Mammary epithelial cell (primary cell): ENCODE measurements at regions of chr4 and their contacts with region 1.

Region 1: DNA sequence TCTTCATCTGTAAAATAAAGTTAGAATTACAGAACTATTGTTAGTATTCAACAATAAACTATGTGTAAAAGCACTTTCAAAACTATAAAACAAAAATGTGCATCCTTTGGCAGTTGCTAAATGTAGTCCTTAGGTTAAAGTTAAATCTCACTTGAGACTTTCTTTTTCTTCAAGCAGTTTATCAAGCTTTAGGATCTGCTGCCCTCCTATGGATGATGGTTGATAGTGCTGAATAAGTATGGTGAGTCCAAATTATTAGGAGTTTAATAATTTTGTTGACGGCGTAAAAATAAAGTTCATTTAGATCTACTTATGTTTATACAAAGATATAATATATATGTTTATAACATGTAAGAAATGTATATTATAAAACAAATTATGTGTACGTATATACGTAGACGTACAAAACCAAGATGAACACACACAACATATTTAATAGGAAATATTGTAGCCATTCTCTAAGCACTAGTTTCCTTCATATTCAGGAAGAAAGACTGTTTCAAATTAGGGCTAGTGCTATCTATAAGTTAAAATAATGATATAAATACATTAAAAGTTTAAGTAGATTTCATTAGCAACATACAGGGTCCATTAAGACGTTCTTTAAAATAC is 22.3 kb downstream of the UGT2A2 start:
- DNase-seq: peak; percentile 27
- H3K4me3 ChIP-seq: no peak overlapping the region
- H3K27ac ChIP-seq: no peak overlapping the region
- H3K4me1 ChIP-seq: no peaks in the 10 kb centered on the region
- H3K27me3 ChIP-seq: no peaks in the 10 kb centered on the region
- CTCF ChIP-seq: peak; percentile 53 to 73

Region 2: DNA sequence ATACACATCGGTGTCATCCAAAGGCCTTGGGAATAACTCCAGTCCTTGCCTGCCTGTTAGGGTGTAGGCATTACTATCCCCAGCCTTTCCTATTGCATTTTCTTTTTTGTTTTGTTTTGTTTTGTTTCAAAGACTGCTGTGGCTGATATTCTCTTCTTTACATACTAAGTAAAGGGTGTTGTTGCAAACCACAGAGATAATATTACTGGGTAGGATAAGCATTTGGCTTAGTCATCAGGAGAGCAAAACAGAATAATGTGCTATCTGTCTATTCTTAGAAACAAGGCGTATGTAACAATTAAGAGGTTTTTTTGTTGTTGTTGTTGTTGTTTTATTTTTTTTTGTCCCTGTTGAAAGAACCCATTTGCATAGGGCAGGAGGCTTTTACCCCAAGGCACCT is 295.1 kb before region 1 on chr4:
- CTCF ChIA-PET with region 1: interaction called, 3 read pairs
- dilution Hi-C with region 1: no loop called
- in situ Hi-C with region 1: loop called (anchors 25 kb)
- intact Hi-C with region 1: loop called (anchors 1 kb)
- DNase-seq: peak; percentile 53
- H3K4me3 ChIP-seq: no peak overlapping the region
- H3K27ac ChIP-seq: no peak overlapping the region
- H3K4me1 ChIP-seq: peaks cover 8% of the 10 kb centered on the region
- H3K27me3 ChIP-seq: no peaks in the 10 kb centered on the region
- CTCF ChIP-seq: no peak

Region 3: DNA sequence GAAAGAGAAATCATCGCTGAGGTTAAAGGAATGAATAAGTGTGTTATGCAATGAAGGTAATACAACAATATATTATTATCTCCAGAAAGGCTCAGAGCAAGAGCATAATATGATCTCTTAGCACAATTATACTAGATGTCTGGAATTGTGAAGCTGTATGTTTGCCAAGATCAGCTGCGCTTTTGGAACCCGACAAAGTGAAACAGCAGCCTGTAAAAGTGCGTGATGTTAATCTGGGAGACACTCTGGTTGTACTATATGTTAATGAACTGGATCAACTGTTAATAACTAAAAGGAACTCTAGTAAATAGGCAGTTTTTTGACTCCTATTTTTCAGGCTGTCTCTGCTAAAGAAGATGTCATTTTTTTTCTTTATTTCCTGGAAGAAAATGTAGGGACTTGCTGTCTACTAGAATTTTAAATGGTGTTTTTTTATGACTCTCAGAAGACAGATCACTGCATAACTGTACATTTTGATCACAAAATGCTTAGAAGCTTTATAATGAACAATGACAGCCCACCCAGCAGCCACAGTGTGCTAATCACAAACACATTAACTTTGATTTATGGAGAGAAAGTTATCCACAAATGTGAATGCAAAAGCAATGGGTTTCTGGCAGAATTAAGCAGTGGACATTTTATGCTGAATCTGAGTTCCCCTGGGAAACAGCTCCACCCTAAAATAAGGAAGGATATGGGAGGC is 286.7 kb before region 1 on chr4:
- CTCF ChIA-PET with region 1: no interaction called
- dilution Hi-C with region 1: no loop called
- in situ Hi-C with region 1: loop called in 1 of 2 experiments (anchors 25 kb)
- intact Hi-C with region 1: no loop called
- DNase-seq: no peak
- H3K4me3 ChIP-seq: no peak overlapping the region
- H3K27ac ChIP-seq: no peak overlapping the region
- H3K4me1 ChIP-seq: no peaks in the 10 kb centered on the region
- H3K27me3 ChIP-seq: no peaks in the 10 kb centered on the region
- CTCF ChIP-seq: no peak